ENCODE measurements at regions of chr1 and their contacts with region 1.

Region 1: GRCh38 chr1:204431310-204432165 is 19.9 kb upstream of the PPP1R15B start:
- DNase-seq: peak; percentile 89
- H3K4me3 Mint-ChIP-seq: no peak overlapping the region
- H3K27ac Mint-ChIP-seq: no peak overlapping the region
- H3K4me1 Mint-ChIP-seq: peaks cover 8% of the 10 kb centered on the region
- H3K27me3 Mint-ChIP-seq: no peaks in the 10 kb centered on the region

Region 2: GRCh38 chr1:204417231-204417997 is 14.1 kb before region 1 on chr1:
- CTCF ChIA-PET with region 1: interaction called, 31 read pairs
- intact Hi-C with region 1: loop called (anchors 2 kb)
- DNase-seq: peak; percentile 38
- H3K4me3 Mint-ChIP-seq: no peak overlapping the region
- H3K27ac Mint-ChIP-seq: no peak overlapping the region
- H3K4me1 Mint-ChIP-seq: peaks cover 19% of the 10 kb centered on the region
- H3K27me3 Mint-ChIP-seq: no peaks in the 10 kb centered on the region

Region 3: GRCh38 chr1:204446370-204447111 is 15.0 kb after region 1 on chr1:
- CTCF ChIA-PET with region 1: interaction called, 115 read pairs
- intact Hi-C with region 1: no loop called
- DNase-seq: peak; percentile 88
- H3K4me3 Mint-ChIP-seq: no peak overlapping the region
- H3K27ac Mint-ChIP-seq: peak overlapping the region; percentile 77
- H3K4me1 Mint-ChIP-seq: peaks cover 54% of the 10 kb centered on the region
- H3K27me3 Mint-ChIP-seq: no peaks in the 10 kb centered on the region

Region 4: GRCh38 chr1:204453141-204453772 is 21.7 kb after region 1 on chr1:
- CTCF ChIA-PET with region 1: interaction called, 115 read pairs
- intact Hi-C with region 1: no loop called
- DNase-seq: peak; percentile 92
- H3K4me3 Mint-ChIP-seq: peak overlapping the region; percentile 60
- H3K27ac Mint-ChIP-seq: peak overlapping the region; percentile 94
- H3K4me1 Mint-ChIP-seq: peaks cover 37% of the 10 kb centered on the region
- H3K27me3 Mint-ChIP-seq: no peaks in the 10 kb centered on the region

Region 5: GRCh38 chr1:204480515-204480914 is 49.0 kb after region 1 on chr1:
- CTCF ChIA-PET with region 1: interaction called, 21 read pairs
- intact Hi-C with region 1: no loop called
- DNase-seq: peak; percentile 21
- H3K4me3 Mint-ChIP-seq: no peak overlapping the region
- H3K27ac Mint-ChIP-seq: no peak overlapping the region
- H3K4me1 Mint-ChIP-seq: peaks cover 63% of the 10 kb centered on the region
- H3K27me3 Mint-ChIP-seq: no peaks in the 10 kb centered on the region

Region 6: DNA sequence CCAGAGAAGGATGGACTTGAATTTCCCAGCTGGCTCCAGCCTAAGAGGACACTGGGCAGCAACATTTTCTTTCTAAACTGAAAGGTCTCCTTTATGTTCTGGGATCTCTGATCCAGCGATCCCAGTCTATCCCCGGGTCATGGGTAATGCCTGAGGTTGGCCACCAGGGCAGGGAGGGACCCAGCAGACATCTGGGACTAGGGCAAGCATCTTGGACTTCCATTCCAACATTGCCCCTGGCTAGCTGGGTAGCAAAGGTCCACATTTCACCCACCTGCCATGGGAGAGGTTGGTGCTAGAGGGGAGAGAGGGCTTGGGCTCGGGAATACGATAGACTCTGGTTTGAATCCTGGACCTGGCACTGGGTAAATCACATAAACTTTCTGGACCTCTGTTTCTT is 169.4 kb after region 1 on chr1:
- CTCF ChIA-PET with region 1: no interaction called
- intact Hi-C with region 1: no loop called
- DNase-seq: no peak
- H3K4me3 Mint-ChIP-seq: no peak overlapping the region
- H3K27ac Mint-ChIP-seq: no peak overlapping the region
- H3K4me1 Mint-ChIP-seq: no peaks in the 10 kb centered on the region
- H3K27me3 Mint-ChIP-seq: no peaks in the 10 kb centered on the region

Measured in activated naive CD4-positive, alpha-beta T cell treated with anti-CD3 and anti-CD28 coated beads for 36 hours (primary cell).